ENCODE measurements at regions of chr3 and their contacts with region 1.

Region 1: GRCh38 chr3:184371570-184372018 is 6.4 kb downstream of the THPO start:
- DNase-seq: peak; percentile 92
- ATAC-seq: peak; percentile 94
- H3K4me3 ChIP-seq: no peak overlapping the region
- H3K27ac ChIP-seq: no peak overlapping the region
- H3K4me1 ChIP-seq: peaks cover 4% of the 10 kb centered on the region; the same call in 1 of the 2 replicates
- H3K27me3 ChIP-seq: peaks cover 18% of the 10 kb centered on the region
- CTCF ChIP-seq: peak; percentile 97

Region 2: GRCh38 chr3:184384856-184385422 is 13.3 kb after region 1 on chr3:
- CTCF ChIA-PET with region 1: interaction called, 11 read pairs
- POLR2A ChIA-PET with region 1: no interaction called
- intact Hi-C with region 1: no loop called
- DNase-seq: no peak
- ATAC-seq: no peak
- H3K4me3 ChIP-seq: no peak overlapping the region
- H3K27ac ChIP-seq: no peak overlapping the region
- H3K4me1 ChIP-seq: no peaks in the 10 kb centered on the region
- H3K27me3 ChIP-seq: peaks cover 28% of the 10 kb centered on the region
- CTCF ChIP-seq: no peak

Region 3: GRCh38 chr3:184417619-184418327 is 46.2 kb after region 1 on chr3:
- CTCF ChIA-PET with region 1: interaction called, 7 read pairs
- POLR2A ChIA-PET with region 1: no interaction called
- intact Hi-C with region 1: loop called (anchors 2 kb)
- DNase-seq: peak; percentile 69
- ATAC-seq: peak; percentile 96
- H3K4me3 ChIP-seq: no peak overlapping the region
- H3K27ac ChIP-seq: no peak overlapping the region
- H3K4me1 ChIP-seq: no peaks in the 10 kb centered on the region
- H3K27me3 ChIP-seq: 0 out of 2 replicates have a peak, but pooled peaks cover 2% of the 10 kb centered on the region
- CTCF ChIP-seq: peak; percentile 89

Region 4: DNA sequence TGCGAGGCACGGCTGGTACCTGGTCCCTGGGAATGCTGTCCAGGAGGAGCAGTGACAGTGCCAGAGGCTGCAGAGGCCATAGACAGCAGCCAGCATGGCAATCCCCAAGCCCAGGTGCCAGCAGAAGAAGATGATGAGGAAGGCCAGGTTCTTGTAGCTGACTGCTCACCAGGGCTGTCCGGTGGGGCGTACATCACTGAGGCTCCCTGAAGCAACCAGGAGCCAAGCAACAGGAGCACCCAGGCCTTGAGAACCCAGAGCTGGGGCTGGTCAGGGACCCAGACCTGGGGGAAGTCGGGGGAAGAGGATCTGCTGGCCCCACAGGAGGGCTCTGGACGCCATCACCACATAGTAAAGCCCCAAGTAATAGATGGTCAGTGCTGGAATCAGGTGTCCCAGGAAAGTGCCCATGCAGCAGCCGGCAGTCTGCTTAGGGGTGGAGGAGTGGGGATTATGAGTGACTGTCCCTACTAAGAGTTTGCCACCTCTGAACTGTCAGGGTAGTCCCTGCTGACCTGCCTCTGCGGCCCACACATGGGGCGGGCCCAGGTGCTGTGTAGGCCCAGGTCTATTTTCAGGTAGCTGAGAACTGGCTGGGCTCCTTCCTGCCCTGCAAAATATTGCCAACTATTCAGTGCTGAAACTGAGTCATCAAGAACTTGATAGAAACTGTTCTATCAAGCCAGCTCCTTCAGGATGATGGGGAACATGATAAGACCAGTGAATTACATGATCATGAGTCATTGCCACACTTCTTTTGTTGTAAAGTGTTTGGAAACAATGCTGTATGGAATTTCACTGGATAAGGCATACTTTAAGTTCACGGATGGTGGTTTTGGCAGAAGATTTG is 76.9 kb after region 1 on chr3:
- CTCF ChIA-PET with region 1: no interaction called
- POLR2A ChIA-PET with region 1: no interaction called
- intact Hi-C with region 1: no loop called
- DNase-seq: peak; percentile 91
- ATAC-seq: peak; percentile 91
- H3K4me3 ChIP-seq: no peak overlapping the region
- H3K27ac ChIP-seq: no peak overlapping the region
- H3K4me1 ChIP-seq: peaks cover 13% of the 10 kb centered on the region
- H3K27me3 ChIP-seq: no peaks in the 10 kb centered on the region
- CTCF ChIP-seq: no peak

Region 5: DNA sequence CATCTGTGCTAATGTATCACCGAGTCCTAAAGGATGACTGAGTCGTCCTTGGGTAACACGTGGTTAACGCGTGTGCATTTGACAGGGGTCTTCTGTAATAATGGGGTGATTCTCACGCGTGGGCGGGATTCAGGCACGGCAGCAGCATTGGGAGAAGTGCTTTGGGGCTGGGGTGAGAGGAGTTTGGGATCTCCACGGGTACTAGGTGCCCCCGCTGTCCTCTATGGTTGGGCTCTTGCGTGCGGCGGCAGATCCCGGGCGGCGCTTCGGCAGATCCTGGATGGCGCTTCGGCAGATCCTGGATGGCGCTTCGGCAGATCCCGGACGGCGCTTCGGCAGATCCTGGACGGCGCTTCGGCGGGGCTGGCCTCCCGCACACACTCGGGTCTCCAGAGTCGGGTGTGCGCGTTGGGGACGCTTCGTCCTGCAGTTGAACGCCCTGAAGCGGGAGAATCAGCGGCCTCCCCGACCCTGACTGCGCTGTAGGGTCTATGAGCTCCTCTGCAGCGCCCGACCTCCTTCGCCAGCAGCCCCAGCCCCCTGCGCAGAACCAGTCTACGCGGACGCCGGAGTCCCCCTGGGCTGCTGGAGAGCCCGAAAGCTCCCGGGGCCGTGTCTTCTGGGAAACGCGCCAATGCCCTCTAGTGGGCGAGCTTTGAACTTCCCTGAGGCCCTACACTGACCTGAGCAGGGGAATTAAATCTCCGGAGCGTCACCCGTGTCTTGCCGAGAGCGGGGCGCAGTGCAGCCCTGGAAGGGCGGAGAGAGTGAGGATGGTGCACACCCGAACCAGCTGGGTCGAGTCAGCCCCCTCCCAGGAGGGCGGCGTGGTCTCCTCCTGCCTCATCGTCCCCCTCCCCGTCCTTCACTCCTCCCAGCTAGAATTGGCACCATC is 141.9 kb after region 1 on chr3:
- CTCF ChIA-PET with region 1: interaction called, 24 read pairs
- POLR2A ChIA-PET with region 1: no interaction called
- intact Hi-C with region 1: loop called (anchors 1 kb)
- DNase-seq: peak; percentile 82
- ATAC-seq: peak; percentile 99
- H3K4me3 ChIP-seq: peak overlapping the region; percentile 60
- H3K27ac ChIP-seq: no peak overlapping the region
- H3K4me1 ChIP-seq: no peaks in the 10 kb centered on the region
- H3K27me3 ChIP-seq: peaks cover 96% of the 10 kb centered on the region
- CTCF ChIP-seq: peak; percentile 79

Region 6: GRCh38 chr3:184808021-184808420 is 436.4 kb after region 1 on chr3:
- CTCF ChIA-PET with region 1: no interaction called
- POLR2A ChIA-PET with region 1: no interaction called
- intact Hi-C with region 1: loop called (anchors 10 kb)
- DNase-seq: no peak
- ATAC-seq: no peak
- H3K4me3 ChIP-seq: no peak overlapping the region
- H3K27ac ChIP-seq: no peak overlapping the region
- H3K4me1 ChIP-seq: peaks cover 9% of the 10 kb centered on the region
- H3K27me3 ChIP-seq: no peaks in the 10 kb centered on the region
- CTCF ChIP-seq: peak; percentile 37; the same call in 1 of the 2 replicates